Activated naive CD4-positive, alpha-beta T cell treated with anti-CD3 and anti-CD28 coated beads for 36 hours (primary cell): ENCODE measurements at regions of chr17 and their contacts with region 1.

Region 1: GRCh38 chr17:21511363-21512198 is 135.4 kb downstream of the KCNJ12 start:
- DNase-seq: peak; percentile 73
- H3K4me3 Mint-ChIP-seq: peak overlapping the region; percentile 69
- H3K27ac Mint-ChIP-seq: no peak overlapping the region
- H3K4me1 Mint-ChIP-seq: peaks cover 9% of the 10 kb centered on the region
- H3K27me3 Mint-ChIP-seq: peaks cover 30% of the 10 kb centered on the region

Region 2: DNA sequence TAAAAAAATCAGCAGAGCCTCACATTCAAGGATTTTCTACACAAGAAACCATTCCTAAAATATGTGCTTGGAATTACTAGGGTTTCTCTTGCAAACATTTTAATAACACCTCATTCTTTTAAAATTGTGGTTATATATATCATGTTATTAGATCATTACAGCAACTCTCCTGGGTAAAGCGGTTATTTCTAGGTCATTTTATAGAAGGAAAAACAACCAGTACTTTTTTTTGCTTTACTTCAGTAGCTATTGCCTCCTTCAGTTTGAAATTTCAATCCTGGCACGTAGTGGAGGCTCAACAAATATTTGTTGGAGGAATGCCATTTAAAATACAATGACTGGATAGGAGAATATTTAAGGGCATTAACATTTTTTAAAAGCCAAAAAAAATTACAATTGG is 711.4 kb before region 1 on chr17:
- CTCF ChIA-PET with region 1: no interaction called
- intact Hi-C with region 1: loop called (anchors 5 kb)
- DNase-seq: no peak
- H3K4me3 Mint-ChIP-seq: no peak overlapping the region
- H3K27ac Mint-ChIP-seq: no peak overlapping the region
- H3K4me1 Mint-ChIP-seq: peaks cover 2% of the 10 kb centered on the region
- H3K27me3 Mint-ChIP-seq: peaks cover 4% of the 10 kb centered on the region

Region 3: DNA sequence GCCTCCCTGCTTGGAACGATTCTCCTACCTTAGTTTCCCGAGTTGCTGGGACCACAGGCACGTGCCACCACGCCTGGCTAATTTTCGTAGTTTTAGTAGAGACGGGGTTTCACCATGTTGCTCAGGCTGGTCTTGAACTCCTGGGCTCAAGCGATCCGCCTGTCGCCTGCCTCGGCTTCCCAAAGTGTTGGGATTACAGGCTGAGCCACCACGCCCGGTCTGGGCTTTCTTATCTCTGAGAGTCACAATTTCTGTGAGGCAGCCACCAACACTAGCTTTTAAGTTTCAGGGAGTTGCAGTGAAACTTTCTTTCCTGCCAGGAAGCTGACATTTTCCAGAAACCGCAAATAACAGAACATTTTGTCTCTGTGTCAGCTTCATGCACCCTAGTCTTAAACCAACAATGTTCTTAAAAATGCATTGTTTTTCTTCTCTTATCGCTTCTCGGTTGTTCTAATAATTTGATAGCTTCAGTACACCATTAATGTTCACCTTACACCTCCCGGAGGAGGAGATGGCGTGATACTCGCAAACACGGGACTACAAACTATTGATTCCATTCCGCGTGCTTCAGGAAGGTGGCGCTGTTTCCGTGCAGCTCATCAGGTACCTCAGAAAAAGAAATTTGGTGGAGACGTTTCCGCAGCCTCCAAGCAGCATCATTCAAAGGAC is 392.2 kb before region 1 on chr17:
- CTCF ChIA-PET with region 1: interaction called, 4 read pairs
- intact Hi-C with region 1: loop called (anchors 1 kb)
- DNase-seq: peak; percentile 83
- H3K4me3 Mint-ChIP-seq: peak overlapping the region; percentile 16
- H3K27ac Mint-ChIP-seq: no peak overlapping the region
- H3K4me1 Mint-ChIP-seq: peaks cover 6% of the 10 kb centered on the region
- H3K27me3 Mint-ChIP-seq: peaks cover 2% of the 10 kb centered on the region

Region 4: GRCh38 chr17:21214015-21214776 is 297.4 kb before region 1 on chr17 and contains the start of gene TMEM11:
- CTCF ChIA-PET with region 1: no interaction called
- intact Hi-C with region 1: loop called (anchors 10 kb)
- DNase-seq: peak; percentile 95
- H3K4me3 Mint-ChIP-seq: peak within 1 kb of the TSS; percentile 91
- H3K27ac Mint-ChIP-seq: peak within 1 kb of the TSS; percentile 91
- H3K4me1 Mint-ChIP-seq: peaks cover 65% of the 10 kb centered on the region
- H3K27me3 Mint-ChIP-seq: no peaks in the 10 kb centered on the region
- total RNA-seq, gene TMEM11: 23.6 to 28.2 TPM

Region 5: DNA sequence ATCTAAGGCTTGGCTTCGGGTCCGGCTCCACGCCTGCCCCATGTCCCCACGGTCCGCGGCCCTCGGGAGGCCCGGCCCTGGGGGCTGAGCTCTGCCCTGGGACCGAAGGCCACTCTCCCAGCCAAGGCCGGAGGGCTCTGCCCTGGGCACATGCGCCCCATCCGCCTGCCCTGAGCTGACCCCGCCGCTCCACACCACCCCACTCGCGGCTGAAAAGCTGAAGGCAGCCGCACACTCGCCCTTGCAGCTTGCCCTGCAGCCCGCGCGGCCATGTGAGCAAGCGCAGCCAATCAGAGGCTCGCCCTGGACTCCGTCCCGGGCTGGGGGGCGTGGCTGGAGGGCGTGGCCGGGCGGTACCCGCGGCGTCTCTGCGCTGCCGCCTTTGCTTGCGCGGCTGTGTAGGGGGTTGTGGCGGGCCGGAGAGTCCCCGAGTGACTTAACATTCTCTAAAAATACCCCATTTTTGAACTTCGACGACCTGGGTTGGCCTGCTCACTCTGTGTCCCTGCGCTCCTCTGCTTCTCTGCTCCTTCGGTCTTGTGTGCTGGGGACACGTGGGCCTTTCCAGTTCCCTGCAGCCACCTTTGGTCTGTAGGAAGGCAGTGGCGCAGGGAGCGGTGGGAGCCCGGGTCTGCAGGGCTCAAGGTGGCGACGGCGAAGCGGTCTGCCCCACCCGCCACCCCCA is 235.9 kb before region 1 on chr17:
- CTCF ChIA-PET with region 1: interaction called, 22 read pairs
- intact Hi-C with region 1: loop called (anchors 1 kb)
- DNase-seq: peak; percentile 96
- H3K4me3 Mint-ChIP-seq: peak overlapping the region; percentile 78
- H3K27ac Mint-ChIP-seq: peak overlapping the region; percentile 77
- H3K4me1 Mint-ChIP-seq: peaks cover 42% of the 10 kb centered on the region
- H3K27me3 Mint-ChIP-seq: no peaks in the 10 kb centered on the region

Region 6: DNA sequence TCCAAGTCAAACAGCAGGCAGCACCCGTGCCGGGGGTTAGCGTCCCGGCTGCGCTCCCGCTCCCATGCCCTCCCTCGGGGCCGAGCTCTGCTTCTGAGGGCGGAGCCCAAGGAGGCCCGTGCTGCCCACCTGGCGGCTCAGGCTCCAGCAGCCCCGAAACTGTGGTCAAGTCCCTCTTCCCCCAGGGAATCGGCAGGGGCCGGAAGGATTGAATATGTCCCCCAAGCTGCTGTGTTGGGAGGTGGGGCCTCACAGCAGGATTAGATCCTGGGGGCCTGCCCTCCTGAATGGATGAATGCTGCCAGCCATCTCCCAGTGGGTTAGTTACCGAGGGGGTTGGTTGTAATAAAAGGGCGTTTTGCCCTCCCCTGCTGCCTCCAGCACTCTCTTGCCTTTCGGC is 193.1 kb before region 1 on chr17:
- CTCF ChIA-PET with region 1: no interaction called
- intact Hi-C with region 1: loop called (anchors 2 kb)
- DNase-seq: no peak
- H3K4me3 Mint-ChIP-seq: no peak overlapping the region
- H3K27ac Mint-ChIP-seq: no peak overlapping the region
- H3K4me1 Mint-ChIP-seq: peaks cover 7% of the 10 kb centered on the region
- H3K27me3 Mint-ChIP-seq: no peaks in the 10 kb centered on the region

Region 7: GRCh38 chr17:21376759-21377690 is 134.6 kb before region 1 on chr17:
- CTCF ChIA-PET with region 1: interaction called, 3 read pairs
- intact Hi-C with region 1: loop called (anchors 5 kb)
- DNase-seq: no peak
- H3K4me3 Mint-ChIP-seq: peak overlapping the region; percentile 27
- H3K27ac Mint-ChIP-seq: no peak overlapping the region
- H3K4me1 Mint-ChIP-seq: peaks cover 6% of the 10 kb centered on the region
- H3K27me3 Mint-ChIP-seq: peaks cover 30% of the 10 kb centered on the region

Region 8: DNA sequence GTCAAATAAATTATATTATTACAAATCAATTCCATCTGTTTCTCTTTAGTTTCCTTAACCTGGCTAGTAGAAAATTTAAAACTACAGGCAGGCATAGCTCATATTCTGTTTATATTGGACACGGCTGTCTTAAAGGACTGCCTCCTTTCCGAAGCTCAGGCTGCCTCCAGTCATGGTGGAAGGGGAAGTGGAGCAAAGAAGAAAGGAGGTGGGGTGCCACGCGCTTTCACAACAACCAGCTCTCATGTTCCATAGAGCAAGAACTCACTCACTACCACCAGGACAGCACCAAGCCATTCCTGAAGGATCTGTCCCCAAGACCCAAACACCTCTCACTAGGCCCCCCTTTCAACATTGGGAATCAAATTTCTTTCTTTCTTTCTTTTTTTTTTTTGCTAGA is 31.4 kb after region 1 on chr17:
- CTCF ChIA-PET with region 1: no interaction called
- intact Hi-C with region 1: no loop called
- DNase-seq: no peak
- H3K4me3 Mint-ChIP-seq: no peak overlapping the region
- H3K27ac Mint-ChIP-seq: no peak overlapping the region
- H3K4me1 Mint-ChIP-seq: peaks cover 42% of the 10 kb centered on the region
- H3K27me3 Mint-ChIP-seq: no peaks in the 10 kb centered on the region